Gastrocnemius medialis (tissue), 4 donors: ENCODE measurements at regions of chr19 and their contacts with region 1.

Region 1: GRCh38 chr19:47124937-47125668 is 5.5 kb upstream of the SAE1 start:
- DNase-seq: no peak
- ATAC-seq: peak; percentile 81 to 84
- H3K4me3 ChIP-seq: no peak overlapping the region
- H3K27ac ChIP-seq: no peak overlapping the region
- H3K4me1 ChIP-seq: peaks cover 0 to 2% of the 10 kb centered on the region in 2 donors
- H3K27me3 ChIP-seq: no peaks in the 10 kb centered on the region
- CTCF ChIP-seq: peak; percentile 68 to 85 (median 82)
- POLR2A ChIP-seq: no peak

Region 2: DNA sequence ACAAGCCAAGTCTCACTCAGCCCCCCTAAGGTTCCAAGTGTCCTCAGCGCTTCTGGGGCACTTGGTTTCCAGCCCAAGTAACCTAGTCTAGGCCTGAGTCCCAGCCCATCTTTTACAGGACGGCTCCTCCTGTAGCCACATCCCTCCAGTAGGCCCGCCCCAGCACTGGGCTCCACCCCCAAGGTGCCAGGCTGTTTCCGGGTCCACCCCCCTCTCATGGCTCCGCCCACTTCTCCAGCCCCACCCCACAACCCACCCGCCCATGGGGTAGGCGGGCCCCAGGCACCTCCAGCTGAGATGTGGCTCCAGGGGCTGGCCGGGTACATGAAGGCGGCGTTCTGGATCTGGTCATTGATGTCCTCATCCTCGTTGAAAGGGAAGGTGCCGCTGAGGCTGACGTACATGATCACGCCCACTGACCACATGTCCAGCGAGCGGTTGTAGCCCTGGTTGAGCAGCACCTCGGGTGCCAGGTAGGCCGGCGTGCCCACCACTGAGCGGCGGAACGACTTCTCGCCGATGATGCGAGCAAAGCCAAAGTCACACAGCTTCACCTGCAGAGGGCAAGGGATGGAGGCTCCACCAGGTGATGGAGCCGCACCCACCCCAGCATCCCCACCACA is 446.9 kb before region 1 on chr19:
- in situ Hi-C with region 1: no loop called
- intact Hi-C with region 1: no loop called
- DNase-seq: no peak
- ATAC-seq: no peak
- H3K4me3 ChIP-seq: no peak overlapping the region
- H3K27ac ChIP-seq: no peak overlapping the region
- H3K4me1 ChIP-seq: no peaks in the 10 kb centered on the region
- H3K27me3 ChIP-seq: no peaks in the 10 kb centered on the region
- CTCF ChIP-seq: no peak
- POLR2A ChIP-seq: no peak

Region 3: DNA sequence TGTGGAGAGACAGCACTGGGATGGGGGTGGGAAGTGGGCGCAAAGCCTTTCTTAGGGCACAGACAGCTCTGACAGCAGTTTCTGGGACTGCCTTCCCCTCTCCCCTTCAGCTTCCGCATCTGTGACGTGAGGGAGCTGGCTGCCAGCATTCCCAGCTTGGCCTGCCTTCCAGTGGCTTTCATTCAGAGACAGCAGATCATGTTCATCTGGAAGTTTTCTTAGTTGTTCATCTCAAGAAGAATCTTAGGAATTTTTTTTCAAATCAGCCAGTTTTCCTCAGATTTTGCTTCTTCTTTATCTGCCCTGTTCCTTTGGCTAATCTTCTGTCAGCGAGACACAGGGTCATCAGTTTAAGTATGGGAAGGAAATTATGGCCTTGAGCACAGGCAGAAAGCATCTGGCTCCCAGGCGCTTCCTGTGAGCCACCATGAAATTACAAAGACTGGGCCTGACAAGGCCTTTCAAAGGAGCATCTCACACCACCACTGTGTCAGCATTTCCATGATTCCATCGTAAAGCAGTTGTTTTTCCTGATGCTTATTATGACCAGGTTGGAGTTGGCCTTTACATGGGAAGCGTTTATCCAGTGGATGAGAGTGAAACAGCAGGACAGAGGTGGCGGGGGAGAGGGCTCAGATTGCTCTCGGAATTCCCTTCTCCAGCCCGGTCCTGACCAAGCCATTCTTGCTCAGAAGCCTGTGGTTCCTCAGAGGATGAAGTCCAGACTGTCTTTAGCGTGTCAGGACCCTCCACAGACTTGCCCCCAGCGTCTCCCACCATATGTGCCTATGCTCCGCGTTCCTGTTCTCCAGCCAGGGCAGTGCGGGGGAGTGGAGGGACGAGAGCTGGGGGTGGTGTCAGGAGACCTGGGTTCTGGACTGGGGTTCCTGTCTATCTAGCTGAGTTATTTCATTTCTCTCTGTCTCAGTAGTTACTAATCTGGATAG is 220.7 kb before region 1 on chr19:
- in situ Hi-C with region 1: no loop called
- intact Hi-C with region 1: no loop called
- DNase-seq: no peak
- ATAC-seq: peak in 1 of 2 donors; percentile 15
- H3K4me3 ChIP-seq: no peak overlapping the region
- H3K27ac ChIP-seq: peak overlapping the region; percentile 11 to 62 (median 36)
- H3K4me1 ChIP-seq: peaks cover 58 to 74% of the 10 kb centered on the region in 2 donors
- H3K27me3 ChIP-seq: no peaks in the 10 kb centered on the region
- CTCF ChIP-seq: no peak
- POLR2A ChIP-seq: no peak

Region 4: GRCh38 chr19:46990991-46991676 is 134.0 kb before region 1 on chr19:
- in situ Hi-C with region 1: no loop called
- intact Hi-C with region 1: no loop called
- DNase-seq: peak; percentile 74 to 81
- ATAC-seq: peak; percentile 88
- H3K4me3 ChIP-seq: no peak overlapping the region
- H3K27ac ChIP-seq: peak overlapping the region; percentile 69 to 71 (median 70)
- H3K4me1 ChIP-seq: peaks cover 19 to 22% of the 10 kb centered on the region in 2 donors
- H3K27me3 ChIP-seq: no peaks in the 10 kb centered on the region
- CTCF ChIP-seq: peak; percentile 70 to 87 (median 84)
- POLR2A ChIP-seq: no peak

Region 5: GRCh38 chr19:47035127-47036096 is 89.7 kb before region 1 on chr19:
- in situ Hi-C with region 1: loop called in 3 of 4 experiments (anchors 10 kb)
- intact Hi-C with region 1: loop called (anchors 1 kb)
- DNase-seq: peak; percentile 56 to 69
- ATAC-seq: peak; percentile 94 to 95
- H3K4me3 ChIP-seq: peak overlapping the region; percentile 51 to 77 (median 58)
- H3K27ac ChIP-seq: peak overlapping the region in 1 of 4 donors; percentile 11
- H3K4me1 ChIP-seq: peaks cover 5 to 12% of the 10 kb centered on the region in 2 donors
- H3K27me3 ChIP-seq: peaks cover 9 to 12% (median 10%) of the 10 kb centered on the region in 3 donors
- CTCF ChIP-seq: peak; percentile 91 to 99 (median 96)
- POLR2A ChIP-seq: no peak

Region 6: DNA sequence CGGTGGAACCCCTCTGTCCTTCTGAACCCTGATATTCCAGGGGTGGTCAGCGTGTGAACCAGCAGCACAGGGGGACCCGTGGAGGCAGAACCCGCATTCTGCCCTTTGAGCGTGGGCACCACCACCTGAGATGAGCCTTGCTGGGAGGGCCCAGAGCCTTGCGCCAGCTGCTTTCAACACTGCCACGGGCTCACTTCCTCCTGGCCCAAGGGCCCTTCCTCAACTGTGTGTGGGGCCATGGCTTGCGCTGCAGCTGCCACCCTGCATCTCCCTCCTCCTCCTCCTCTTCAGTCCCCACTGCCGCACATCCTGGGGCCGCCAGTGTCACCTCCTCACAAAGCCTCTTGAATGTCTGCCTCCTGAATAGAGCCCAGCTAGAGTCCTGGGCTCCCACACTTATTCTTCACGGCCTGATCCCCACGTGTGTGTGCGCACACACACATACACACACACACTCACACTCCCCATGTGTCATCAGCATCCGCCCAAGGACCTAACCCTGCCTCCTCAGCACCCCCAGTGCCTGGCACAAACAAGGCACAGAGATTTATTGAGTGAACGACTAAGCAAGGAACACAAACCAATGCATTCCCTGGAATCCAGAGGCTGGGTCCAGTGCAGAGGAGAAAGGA is 49.8 kb before region 1 on chr19:
- in situ Hi-C with region 1: loop called (anchors 5 kb)
- intact Hi-C with region 1: loop called (anchors 1 kb)
- DNase-seq: no peak
- ATAC-seq: no peak
- H3K4me3 ChIP-seq: no peak overlapping the region
- H3K27ac ChIP-seq: no peak overlapping the region
- H3K4me1 ChIP-seq: no peaks in the 10 kb centered on the region
- H3K27me3 ChIP-seq: no peaks in the 10 kb centered on the region
- CTCF ChIP-seq: no peak
- POLR2A ChIP-seq: no peak

Region 7: DNA sequence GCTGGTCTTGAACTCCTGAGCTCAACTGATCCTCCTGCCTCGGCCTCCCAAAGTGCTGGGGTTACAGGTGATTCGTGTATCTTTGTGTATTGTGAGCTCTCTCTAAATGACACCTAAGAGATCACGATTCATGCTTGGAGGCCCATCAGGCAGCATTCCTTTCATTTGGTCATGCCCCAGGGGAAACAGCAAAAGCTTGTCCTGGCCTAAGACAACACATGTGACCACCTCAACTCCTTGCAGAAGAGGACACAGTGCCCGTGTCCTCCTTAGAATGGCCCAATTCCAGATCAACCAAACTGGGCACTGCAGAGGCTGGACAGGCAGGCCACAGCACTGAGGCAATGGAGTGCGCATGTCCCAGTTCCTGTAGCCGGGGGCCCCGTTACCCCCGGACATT is 44.0 kb before region 1 on chr19:
- in situ Hi-C with region 1: loop called (anchors 5 kb)
- intact Hi-C with region 1: loop called (anchors 1 kb)
- DNase-seq: no peak
- ATAC-seq: no peak
- H3K4me3 ChIP-seq: no peak overlapping the region
- H3K27ac ChIP-seq: peak overlapping the region in 1 of 4 donors; percentile 80
- H3K4me1 ChIP-seq: no peaks in the 10 kb centered on the region
- H3K27me3 ChIP-seq: no peaks in the 10 kb centered on the region
- CTCF ChIP-seq: no peak
- POLR2A ChIP-seq: no peak